ENCODE measurements at regions of chr2 and their contacts with region 1.

Region 1: DNA sequence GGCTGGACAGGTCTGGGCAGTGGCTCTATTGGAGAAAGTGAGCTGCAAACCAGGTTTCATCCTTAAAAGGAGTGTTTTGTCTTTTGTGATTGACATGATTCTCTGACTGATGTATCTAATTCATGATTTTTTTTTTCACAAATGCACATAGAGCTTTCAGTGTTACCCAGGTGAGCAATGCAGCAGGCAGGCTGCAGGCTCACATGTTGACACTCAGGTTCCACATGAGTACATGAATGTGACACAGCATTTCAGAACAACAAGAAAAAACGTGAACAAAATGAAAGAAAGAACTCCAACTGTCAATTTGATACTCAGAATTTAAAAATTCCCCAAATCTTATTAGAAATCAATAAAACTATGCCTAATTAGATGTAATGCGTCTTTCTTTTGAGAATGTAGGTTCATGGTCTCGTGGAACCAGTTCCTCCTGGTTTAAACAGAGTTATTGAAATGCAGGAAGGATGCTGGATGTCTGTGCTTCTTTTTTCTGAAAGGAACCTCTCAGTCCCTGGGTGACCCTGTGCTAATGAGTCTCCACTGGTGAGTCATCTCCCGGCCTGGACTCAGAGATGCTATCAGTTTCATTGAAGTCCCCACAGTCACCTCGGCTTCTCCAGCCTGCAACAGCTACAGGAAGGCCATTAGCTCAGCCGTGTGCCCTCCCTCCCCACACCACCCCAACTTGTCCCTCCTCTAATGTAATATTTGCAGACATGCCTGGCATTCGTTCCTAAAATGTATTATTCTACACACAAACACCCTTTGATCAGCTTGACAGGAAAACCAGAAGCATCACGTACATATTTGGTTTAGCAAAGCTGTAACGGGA is 430.4 kb downstream of the LPIN1 start:
- DNase-seq: peak; percentile 51 to 75 (median 72)
- ATAC-seq: peak; percentile 60 to 96 (median 90)
- H3K4me3 ChIP-seq: no peak overlapping the region
- H3K27ac ChIP-seq: peak overlapping the region in 7 of 12 donors; percentile 2 to 65 (median 6)
- H3K4me1 ChIP-seq: peaks cover 8 to 33% (median 22%) of the 10 kb centered on the region in 12 donors
- H3K27me3 ChIP-seq: no peaks in the 10 kb centered on the region
- CTCF ChIP-seq: no peak
- POLR2A ChIP-seq: no peak

Region 2: DNA sequence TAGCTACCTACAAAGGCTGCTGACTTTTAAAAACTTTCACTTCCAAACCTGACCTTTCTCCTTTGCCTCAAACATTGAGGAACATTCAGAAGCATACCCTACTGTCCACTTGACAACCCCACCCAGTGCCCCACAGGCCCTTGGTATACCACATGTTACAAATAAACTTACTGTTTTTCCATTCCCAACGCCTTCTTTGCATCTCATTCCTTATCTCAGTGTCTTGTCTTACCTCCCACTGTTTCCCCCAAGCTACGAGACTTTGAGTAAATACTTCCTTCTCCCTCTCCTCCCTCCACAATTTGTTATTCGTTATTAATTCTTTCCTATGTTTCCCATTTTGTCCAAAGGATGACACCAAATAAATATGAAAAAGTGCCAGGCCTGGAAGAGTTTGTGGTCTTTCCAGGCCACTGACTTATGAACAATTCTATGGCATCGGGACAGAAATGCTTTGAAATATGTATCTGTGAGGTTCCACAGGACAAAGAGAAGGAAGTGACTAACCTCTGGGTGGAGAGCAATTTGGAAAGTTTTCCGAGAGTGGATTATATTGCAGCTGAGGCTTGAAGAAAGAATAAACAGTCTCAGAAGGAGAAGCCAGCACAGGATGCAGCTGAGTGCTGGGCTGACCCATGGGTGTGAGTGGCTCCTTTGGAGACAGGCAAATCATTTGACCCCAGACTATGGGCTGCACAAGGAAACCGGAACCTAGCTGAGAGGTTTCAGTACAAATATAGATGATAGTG is 21.4 kb before region 1 on chr2:
- intact Hi-C with region 1: loop called in 1 of 10 experiments (anchors 1 kb)
- DNase-seq: peak in 3 of 5 donors; percentile 33 to 54 (median 35)
- ATAC-seq: peak; percentile 47 to 96 (median 92)
- H3K4me3 ChIP-seq: no peak overlapping the region
- H3K27ac ChIP-seq: peak overlapping the region in 8 of 12 donors; percentile 25 to 62 (median 48)
- H3K4me1 ChIP-seq: peaks cover 0 to 23% (median 7%) of the 10 kb centered on the region in 12 donors
- H3K27me3 ChIP-seq: no peaks in the 10 kb centered on the region
- CTCF ChIP-seq: no peak
- POLR2A ChIP-seq: no peak

Region 3: DNA sequence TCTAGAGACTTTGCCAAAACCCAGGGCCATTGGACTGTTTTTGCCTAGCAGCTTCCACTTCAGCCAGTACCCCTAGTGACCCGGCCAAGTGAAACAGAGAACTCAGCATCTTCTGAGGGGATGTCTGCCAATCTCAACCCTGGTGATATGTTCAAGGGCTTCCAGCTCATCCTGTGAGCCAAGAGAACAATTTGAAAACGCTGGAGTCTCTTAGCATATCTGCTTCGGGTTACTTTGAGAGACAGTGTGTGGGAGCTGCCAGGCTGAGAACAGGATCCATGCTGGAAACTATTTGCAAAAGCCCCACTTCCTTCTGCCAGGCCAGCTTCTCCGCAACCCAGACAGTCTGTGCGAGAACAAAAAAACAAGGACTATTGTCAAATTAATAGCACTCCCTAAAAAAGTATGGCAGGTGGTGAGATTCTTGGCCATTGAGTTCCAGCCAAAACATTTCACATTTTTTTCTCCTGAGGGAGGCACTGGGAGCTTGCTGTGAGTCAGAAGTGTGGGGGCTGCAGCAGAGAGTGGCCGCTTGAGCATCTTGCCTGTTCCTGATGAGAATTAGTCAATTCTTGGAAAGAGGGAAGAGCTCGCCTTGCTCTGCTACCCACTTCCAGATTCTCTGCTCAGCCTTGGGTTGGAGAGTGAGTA is 144.3 kb after region 1 on chr2:
- intact Hi-C with region 1: loop called in 1 of 10 experiments (anchors 10 kb)
- DNase-seq: peak in 4 of 5 donors; percentile 25 to 68 (median 48)
- ATAC-seq: peak; percentile 53 to 88 (median 81)
- H3K4me3 ChIP-seq: no peak overlapping the region
- H3K27ac ChIP-seq: peak overlapping the region in 8 of 12 donors; percentile 2 to 41 (median 28)
- H3K4me1 ChIP-seq: peaks cover 0 to 26% (median 5%) of the 10 kb centered on the region in 12 donors
- H3K27me3 ChIP-seq: no peaks in the 10 kb centered on the region
- CTCF ChIP-seq: peak in 2 of 12 donors; percentile 3 to 16
- POLR2A ChIP-seq: no peak